ENCODE measurements at regions of chr2 and their contacts with region 1.

Region 1: DNA sequence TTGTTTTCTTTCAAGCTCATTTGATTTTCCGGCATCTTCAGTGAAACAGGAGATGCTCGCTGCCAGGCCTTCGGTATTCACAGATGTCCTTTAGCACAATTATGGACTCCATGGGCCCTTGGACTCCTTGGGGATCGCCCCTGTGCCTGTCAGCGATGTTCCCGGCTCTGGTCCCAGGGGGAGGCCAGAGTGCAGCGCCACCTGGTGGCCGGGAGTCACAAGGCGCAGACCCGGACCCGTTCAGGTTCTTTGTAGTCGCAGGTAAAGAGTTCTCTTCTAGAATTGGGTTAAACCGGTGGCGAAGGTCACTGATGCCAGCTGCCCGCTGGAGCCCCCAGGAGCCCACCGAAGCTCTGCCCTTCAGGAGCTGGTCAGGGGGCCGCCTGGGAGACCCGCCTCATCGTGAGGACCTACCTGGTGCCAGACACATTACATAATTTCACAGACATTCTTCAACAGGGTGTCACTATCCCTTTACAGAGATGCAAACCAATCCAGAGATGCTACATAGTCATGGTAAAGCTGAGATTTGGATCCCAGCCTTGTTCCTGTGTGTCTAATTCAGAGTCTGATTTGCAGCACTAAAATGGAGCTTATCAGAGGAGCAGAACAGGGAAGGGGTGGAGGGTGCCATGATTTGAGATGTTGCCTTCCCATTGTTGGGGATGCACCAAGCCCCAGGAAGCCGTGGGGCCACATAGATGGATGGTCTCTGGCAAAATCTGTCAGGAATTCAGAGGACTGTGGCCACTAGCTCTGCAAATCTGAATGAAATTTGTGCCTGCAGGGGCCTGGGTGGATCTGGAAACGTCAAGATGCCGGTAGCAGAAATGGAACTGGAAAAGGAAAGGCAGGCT is 6.0 kb upstream of the INPP5D start:
- DNase-seq: peak; percentile 61
- H3K4me3 Mint-ChIP-seq: no peak overlapping the region
- H3K27ac Mint-ChIP-seq: no peak overlapping the region
- H3K4me1 Mint-ChIP-seq: peaks cover 35% of the 10 kb centered on the region
- H3K27me3 Mint-ChIP-seq: no peaks in the 10 kb centered on the region
- CTCF ChIP-seq: peak; percentile 88

Region 2: DNA sequence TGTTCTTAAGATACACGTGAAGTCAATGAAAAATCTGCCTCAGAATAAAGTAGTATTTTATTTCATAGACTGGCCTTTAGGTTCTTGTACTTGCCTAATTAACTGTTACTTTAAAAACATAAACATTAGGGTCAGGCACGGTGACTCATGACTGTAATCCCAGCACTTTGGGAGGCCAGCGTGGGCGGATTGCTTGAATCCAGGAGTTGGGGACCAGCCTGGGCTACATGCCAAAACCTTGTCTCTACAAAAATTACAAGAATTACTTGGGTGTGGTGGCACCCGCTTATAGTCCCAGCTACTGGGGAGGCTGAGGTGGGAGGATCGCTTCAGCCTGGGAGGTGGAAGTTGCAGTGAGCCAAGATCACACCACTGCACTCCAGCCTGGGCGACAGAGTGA is 200.1 kb before region 1 on chr2:
- CTCF ChIA-PET with region 1: interaction called, 17 read pairs
- POLR2A ChIA-PET with region 1: no interaction called
- intact Hi-C with region 1: loop called (anchors 2 kb)
- DNase-seq: peak; percentile 97
- H3K4me3 Mint-ChIP-seq: no peak overlapping the region
- H3K27ac Mint-ChIP-seq: no peak overlapping the region
- H3K4me1 Mint-ChIP-seq: peaks cover 28% of the 10 kb centered on the region
- H3K27me3 Mint-ChIP-seq: no peaks in the 10 kb centered on the region
- CTCF ChIP-seq: no peak

Region 3: DNA sequence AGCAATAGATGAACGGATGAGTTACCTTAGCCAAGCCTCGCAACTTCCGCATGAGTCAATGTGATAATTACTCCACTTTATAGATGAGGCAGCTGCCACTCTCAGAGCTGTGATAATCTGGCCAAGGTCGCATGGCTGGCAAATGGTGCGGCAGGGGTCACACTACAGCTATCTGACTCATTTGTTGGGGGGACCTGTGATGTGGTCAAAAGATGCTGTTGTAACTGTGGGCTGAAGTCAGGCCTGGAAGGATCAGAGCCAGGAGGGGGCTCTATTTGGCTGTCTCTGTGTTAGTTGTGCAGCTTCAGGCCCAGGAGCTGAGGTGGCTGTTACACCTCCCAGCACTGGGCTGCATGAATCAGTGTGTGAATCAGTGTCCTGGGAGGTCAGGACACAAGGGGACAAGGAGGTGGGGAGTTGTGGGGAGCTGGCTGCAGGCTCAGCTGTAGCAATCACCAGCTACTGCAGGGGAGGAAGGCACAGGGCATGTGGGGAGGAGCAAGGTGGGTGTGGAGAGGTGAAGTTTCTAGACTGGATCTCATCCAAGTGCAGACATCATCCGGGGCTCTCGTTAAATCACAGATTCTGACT is 74.2 kb before region 1 on chr2:
- CTCF ChIA-PET with region 1: interaction called, 6 read pairs
- POLR2A ChIA-PET with region 1: no interaction called
- intact Hi-C with region 1: loop called (anchors 2 kb)
- DNase-seq: peak; percentile 87
- H3K4me3 Mint-ChIP-seq: peak overlapping the region; percentile 28
- H3K27ac Mint-ChIP-seq: peak overlapping the region; percentile 44
- H3K4me1 Mint-ChIP-seq: peaks cover 12% of the 10 kb centered on the region
- H3K27me3 Mint-ChIP-seq: no peaks in the 10 kb centered on the region
- CTCF ChIP-seq: peak; percentile 24

Region 4: GRCh38 chr2:233033672-233034071 is 20.5 kb before region 1 on chr2:
- CTCF ChIA-PET with region 1: interaction called, 22 read pairs
- POLR2A ChIA-PET with region 1: interaction called, 4 read pairs
- intact Hi-C with region 1: no loop called
- DNase-seq: no peak
- H3K4me3 Mint-ChIP-seq: no peak overlapping the region
- H3K27ac Mint-ChIP-seq: no peak overlapping the region
- H3K4me1 Mint-ChIP-seq: peaks cover 10% of the 10 kb centered on the region
- H3K27me3 Mint-ChIP-seq: no peaks in the 10 kb centered on the region
- CTCF ChIP-seq: no peak

Region 5: DNA sequence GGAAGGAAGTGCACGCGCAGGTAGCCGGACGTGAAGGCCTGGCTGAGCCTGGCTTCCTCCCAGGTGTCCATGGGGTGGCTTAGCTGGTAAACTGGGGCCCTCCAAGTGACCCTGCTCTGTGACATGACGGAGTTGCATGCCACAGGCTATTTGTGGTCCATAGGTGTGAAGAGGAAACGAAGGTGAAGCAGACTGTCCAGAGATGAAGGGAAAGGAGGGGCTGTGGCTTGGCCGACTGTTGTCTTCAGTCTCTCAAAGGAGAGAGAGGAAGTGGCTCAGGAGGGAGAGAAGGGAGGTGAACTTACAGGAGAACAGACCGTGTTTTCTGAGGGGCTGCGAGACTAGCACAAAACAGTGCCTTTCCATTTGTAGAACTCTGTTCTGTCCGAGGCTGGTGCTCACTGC is 25.3 kb after region 1 on chr2:
- CTCF ChIA-PET with region 1: interaction called, 10 read pairs
- POLR2A ChIA-PET with region 1: no interaction called
- intact Hi-C with region 1: no loop called
- DNase-seq: no peak
- H3K4me3 Mint-ChIP-seq: no peak overlapping the region
- H3K27ac Mint-ChIP-seq: no peak overlapping the region
- H3K4me1 Mint-ChIP-seq: no peaks in the 10 kb centered on the region
- H3K27me3 Mint-ChIP-seq: no peaks in the 10 kb centered on the region
- CTCF ChIP-seq: no peak

Region 6: DNA sequence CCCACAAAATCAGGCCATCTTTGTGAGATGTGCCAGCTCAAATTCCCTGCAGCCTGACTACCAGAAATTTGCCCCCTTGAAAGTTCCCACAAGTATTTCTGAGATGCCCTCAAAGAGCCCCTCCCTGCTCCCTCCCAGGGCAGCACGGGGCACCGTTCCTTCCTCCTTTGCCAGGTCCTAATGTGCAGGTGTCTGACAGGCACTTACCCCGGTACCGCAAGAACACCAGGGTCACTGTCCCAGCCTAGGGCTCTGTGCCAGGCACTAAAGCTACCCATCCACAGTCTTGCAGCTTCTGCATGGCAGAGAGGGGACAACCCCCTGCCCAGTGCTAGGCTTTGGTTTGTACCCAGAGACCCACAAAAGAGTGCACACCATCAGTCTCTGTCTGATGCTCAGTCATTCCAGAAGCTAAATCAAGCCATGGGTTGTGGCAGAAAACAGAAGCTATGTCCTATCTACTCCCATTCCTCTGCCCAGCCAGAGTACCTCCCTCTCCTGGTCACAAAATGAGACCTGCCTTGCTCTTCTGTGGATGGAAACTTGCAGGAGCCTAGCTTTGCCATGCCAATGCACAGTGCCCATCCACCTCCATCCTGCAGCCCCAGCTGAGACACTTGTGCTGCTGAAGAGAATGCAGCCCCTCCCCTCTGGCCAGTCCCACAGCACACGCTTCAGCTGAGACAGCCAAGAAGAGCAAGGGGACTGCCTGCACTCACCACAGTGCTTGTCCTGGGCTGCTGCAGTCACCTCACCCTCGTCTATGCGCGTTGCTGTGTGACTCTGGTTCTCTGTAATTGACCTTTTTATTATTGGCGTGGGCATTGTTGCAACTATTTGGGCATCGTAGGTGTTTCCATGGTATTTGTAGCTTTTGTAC is 54.7 kb after region 1 on chr2:
- CTCF ChIA-PET with region 1: no interaction called
- POLR2A ChIA-PET with region 1: no interaction called
- intact Hi-C with region 1: no loop called
- DNase-seq: no peak
- H3K4me3 Mint-ChIP-seq: no peak overlapping the region
- H3K27ac Mint-ChIP-seq: no peak overlapping the region
- H3K4me1 Mint-ChIP-seq: peaks cover 6% of the 10 kb centered on the region
- H3K27me3 Mint-ChIP-seq: peaks cover 18% of the 10 kb centered on the region
- CTCF ChIP-seq: no peak

Measured in MCF 10A (cell line).